Spleen (tissue), 13 donors: ENCODE measurements at regions of chr1 and their contacts with region 1.

Region 1: DNA sequence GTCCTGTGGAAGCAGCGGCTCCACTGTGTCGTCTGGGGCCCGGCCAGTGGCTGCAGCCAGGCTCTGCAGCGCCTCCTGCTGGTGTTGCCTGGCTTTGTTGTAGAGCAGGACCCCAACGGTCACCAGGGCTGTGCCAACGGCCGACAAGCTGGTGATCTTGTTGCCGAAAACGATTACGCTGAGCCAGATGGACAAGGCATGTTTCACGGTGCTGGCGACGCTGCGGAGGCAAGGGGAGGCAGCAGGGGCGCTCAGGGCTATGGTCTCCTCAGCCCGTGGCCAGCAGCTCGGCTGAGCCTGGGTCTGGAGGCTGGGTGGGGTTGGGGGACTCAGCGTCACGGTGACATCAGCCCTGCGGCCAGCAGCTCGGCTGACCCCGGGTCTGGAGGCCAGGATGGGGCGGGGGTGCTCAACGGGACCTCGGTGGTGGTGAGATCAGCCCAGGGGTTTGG is 7.0 kb upstream of the CDK11B start:
- DNase-seq: peak; percentile 76
- H3K4me3 ChIP-seq: no peak overlapping the region
- H3K27ac ChIP-seq: no peak overlapping the region
- H3K4me1 ChIP-seq: peaks cover 0 to 10% (median 0%) of the 10 kb centered on the region in 6 donors
- H3K27me3 ChIP-seq: no peaks in the 10 kb centered on the region
- CTCF ChIP-seq: peak in 8 of 11 experiments; percentile 12 to 59 (median 48)
- POLR2A ChIP-seq: no peak

Region 2: GRCh38 chr1:1721201-1721600 is 55.4 kb after region 1 on chr1:
- intact Hi-C with region 1: loop called (anchors 10 kb)
- DNase-seq: no peak
- H3K4me3 ChIP-seq: no peak overlapping the region
- H3K27ac ChIP-seq: no peak overlapping the region
- H3K4me1 ChIP-seq: peaks cover 0 to 15% (median 10%) of the 10 kb centered on the region in 6 donors
- H3K27me3 ChIP-seq: no peaks in the 10 kb centered on the region
- CTCF ChIP-seq: no peak
- POLR2A ChIP-seq: no peak